ENCODE measurements at regions of chr17 and their contacts with region 1.

Region 1: GRCh38 chr17:76681222-76682137 is 29.3 kb downstream of the MXRA7 start:
- DNase-seq: peak; percentile 89
- ATAC-seq: peak; percentile 85
- H3K4me3 Mint-ChIP-seq: no peak overlapping the region
- H3K27ac Mint-ChIP-seq: no peak overlapping the region
- H3K4me1 Mint-ChIP-seq: peaks cover 4% of the 10 kb centered on the region
- H3K27me3 Mint-ChIP-seq: no peaks in the 10 kb centered on the region
- CTCF ChIP-seq: peak; percentile 48; the same call in 1 of the 2 replicates

Region 2: DNA sequence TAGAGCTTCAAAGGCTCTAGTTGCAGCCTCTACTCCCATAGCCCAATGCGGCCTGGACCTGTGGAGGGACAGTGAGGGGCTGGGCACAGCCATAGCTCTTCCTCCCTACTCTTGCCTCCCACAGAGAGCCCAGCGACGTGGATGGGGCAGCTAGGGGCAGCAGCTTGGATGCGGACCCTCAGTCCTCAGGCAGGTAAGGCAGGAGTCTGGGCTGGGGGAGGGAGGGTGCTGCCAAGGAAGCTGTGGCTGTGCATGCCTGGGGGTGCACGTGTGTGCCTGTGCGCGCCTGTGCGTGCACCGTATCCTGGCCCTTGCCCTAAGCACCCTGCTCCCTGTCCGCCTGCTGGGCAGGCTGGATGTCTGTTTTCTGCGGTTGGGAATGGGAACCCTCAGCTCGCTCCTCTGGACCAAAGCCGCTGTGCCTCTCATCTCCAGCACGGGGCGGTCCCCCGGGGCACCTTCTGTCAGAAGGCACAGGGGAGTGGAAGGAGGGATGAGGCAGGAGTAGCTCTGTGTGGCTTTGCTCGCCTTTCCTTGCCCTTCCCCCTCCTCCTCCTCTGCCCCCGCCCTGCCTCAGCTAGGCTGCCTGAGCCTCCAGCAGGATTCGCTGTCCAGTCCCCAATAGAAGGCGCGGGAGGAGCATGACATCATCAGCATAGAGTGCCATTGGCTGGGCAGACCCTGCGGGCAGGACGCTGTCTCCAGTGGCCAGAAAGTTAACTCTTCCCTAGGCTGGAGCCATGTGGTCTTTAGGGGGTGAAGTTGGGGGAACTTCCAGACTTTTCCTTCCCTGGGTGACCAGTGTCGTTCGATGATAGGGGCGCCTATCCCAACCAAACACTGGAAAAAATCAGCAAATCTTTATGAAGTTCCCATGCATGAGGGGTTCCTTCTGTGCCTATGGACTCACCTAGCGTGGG is 140.8 kb before region 1 on chr17:
- CTCF ChIA-PET with region 1: interaction called, 10 read pairs
- POLR2A ChIA-PET with region 1: no interaction called
- DNase-seq: peak; percentile 95
- ATAC-seq: peak; percentile 91
- H3K4me3 Mint-ChIP-seq: peak overlapping the region; percentile 74
- H3K27ac Mint-ChIP-seq: peak overlapping the region; percentile 80
- H3K4me1 Mint-ChIP-seq: peaks cover 40% of the 10 kb centered on the region
- H3K27me3 Mint-ChIP-seq: peaks cover 43% of the 10 kb centered on the region
- CTCF ChIP-seq: no peak

Region 3: DNA sequence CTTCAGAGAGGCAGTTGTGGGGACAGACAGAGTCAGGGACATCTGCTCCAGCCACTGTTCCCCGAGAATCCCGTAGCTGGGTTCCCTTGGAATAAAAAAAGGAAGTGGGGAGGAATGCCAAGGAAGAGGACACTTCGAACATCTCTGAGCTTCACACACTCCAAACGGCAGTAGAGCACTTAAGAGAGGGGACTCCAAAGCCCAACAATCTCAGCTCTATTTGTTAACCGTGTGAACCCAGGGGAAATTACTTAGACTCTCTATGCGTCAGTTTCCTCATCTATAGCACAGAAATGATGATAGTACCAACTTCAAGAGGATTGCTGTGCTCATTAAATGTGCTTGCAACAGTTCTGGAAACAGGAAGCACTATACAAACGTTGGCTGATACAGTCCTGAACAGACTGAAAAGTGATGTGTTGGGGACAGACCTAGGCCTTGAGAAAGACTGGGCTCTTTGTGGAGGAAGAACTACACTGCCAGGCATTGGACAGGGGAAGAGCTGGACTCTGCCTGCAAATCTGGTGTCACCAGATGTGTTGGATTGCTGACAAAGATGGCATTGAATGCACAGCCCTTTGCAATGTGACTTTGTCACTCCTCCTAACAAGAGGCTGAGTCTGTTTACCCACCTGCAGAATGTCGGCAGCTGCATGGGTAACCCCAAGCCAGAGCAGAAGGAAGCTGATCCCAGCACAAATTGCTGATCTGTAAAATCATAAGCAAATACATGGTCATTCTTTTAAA is 83.6 kb before region 1 on chr17:
- CTCF ChIA-PET with region 1: interaction called, 15 read pairs
- POLR2A ChIA-PET with region 1: no interaction called
- DNase-seq: no peak
- ATAC-seq: no peak
- H3K4me3 Mint-ChIP-seq: no peak overlapping the region
- H3K27ac Mint-ChIP-seq: no peak overlapping the region
- H3K4me1 Mint-ChIP-seq: peaks cover 15% of the 10 kb centered on the region
- H3K27me3 Mint-ChIP-seq: no peaks in the 10 kb centered on the region; the same call in 1 of the 2 replicates
- CTCF ChIP-seq: no peak

Region 4: GRCh38 chr17:76631829-76632565 is 49.5 kb before region 1 on chr17:
- CTCF ChIA-PET with region 1: interaction called, 20 read pairs
- POLR2A ChIA-PET with region 1: no interaction called
- DNase-seq: no peak
- ATAC-seq: no peak
- H3K4me3 Mint-ChIP-seq: no peak overlapping the region
- H3K27ac Mint-ChIP-seq: no peak overlapping the region
- H3K4me1 Mint-ChIP-seq: peaks cover 28% of the 10 kb centered on the region
- H3K27me3 Mint-ChIP-seq: no peaks in the 10 kb centered on the region
- CTCF ChIP-seq: no peak

Region 5: DNA sequence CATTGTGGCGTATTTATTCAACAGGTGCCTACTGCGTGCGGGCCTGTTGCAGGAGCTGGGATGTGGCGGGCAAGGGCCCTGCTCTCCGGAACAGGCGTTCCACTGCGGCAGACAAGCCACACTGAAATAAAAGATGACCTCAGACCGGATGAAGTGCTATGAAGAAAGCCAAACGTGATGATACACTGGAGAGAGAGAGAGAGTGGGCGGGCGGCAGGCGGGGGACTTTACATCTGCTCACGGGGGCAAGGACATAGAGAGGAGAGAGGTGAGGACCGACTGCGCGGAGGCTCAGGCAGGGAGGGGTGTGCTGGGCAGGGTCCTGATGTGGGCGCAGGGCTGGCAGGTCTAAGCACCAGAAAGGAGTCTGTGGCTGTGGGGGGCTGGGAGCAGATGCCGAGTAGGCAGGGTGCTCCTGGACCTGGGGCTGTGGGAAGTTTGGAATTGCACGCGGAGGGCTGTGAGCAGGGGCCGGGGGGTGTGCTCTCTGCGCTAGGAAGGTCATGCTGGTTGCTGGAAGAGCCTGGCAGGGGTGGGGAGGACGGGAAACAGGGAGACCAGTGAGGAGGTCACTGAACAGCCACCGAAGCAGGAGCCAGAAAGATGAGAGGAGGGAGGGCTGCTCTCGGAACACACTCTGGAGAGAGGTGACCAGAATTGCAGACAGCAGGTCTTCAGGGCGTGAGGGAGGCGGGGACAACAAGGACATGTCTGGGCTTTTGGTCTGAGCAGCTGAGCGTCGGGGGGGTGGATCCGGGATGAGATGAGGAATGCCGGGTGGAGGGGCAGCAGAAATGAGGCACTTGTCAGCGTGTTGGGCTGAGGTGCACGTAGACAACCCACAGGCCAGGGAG is 19.4 kb after region 1 on chr17:
- CTCF ChIA-PET with region 1: interaction called, 43 read pairs
- POLR2A ChIA-PET with region 1: no interaction called
- DNase-seq: peak; percentile 41
- ATAC-seq: peak; percentile 61
- H3K4me3 Mint-ChIP-seq: no peak overlapping the region
- H3K27ac Mint-ChIP-seq: peak overlapping the region; percentile 87
- H3K4me1 Mint-ChIP-seq: peaks cover 46% of the 10 kb centered on the region
- H3K27me3 Mint-ChIP-seq: no peaks in the 10 kb centered on the region
- CTCF ChIP-seq: no peak

Region 6: DNA sequence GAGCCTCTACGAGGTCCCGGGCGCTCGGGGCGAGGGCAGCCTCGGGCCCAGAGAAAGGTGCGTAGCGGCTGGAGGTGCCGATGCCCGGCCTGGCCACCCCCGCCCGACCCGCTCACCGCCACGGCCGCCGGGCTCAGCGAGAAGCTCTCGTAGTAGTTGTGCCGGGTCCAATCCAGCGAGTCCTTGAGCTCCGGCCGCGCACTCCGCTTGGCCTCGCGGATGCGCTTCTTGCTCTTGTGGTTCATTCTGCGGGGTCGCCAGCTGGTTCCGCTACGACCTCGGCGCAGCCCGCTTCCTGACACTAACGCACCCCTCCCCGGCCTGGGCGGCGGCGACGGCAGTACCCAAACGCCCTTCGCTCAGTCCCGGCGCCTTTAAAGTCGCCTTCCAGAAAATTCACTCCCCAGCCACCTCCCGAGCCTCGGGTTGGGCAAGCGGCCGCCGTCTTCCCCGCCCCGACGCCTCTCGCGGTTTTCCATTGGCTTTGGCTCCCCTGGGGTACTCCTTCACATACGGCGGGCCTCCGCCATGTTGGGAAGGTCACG is 44.8 kb after region 1 on chr17 and contains the start of gene JMJD6:
- CTCF ChIA-PET with region 1: interaction called, 12 read pairs
- POLR2A ChIA-PET with region 1: no interaction called
- DNase-seq: peak; percentile 96
- ATAC-seq: peak; percentile 92
- H3K4me3 Mint-ChIP-seq: peak within 1 kb of the TSS; percentile 89
- H3K27ac Mint-ChIP-seq: peak within 1 kb of the TSS; percentile 93
- H3K4me1 Mint-ChIP-seq: peaks cover 15% of the 10 kb centered on the region
- H3K27me3 Mint-ChIP-seq: no peaks in the 10 kb centered on the region
- CTCF ChIP-seq: no peak
- total RNA-seq, gene JMJD6: 20.3 to 23.8 TPM (median 21.6 TPM) in 3 replicates

Measured in WTC11 (cell line).